Heart left ventricle (tissue), 16 donors: ENCODE measurements at regions of chr9 and their contacts with region 1.

Region 1: GRCh38 chr9:85108229-85108628 is 438.7 kb downstream of the NTRK2 start:
- DNase-seq: no peak
- ATAC-seq: no peak
- H3K4me3 ChIP-seq: no peak overlapping the region
- H3K27ac ChIP-seq: no peak overlapping the region
- H3K4me1 ChIP-seq: no peaks in the 10 kb centered on the region
- H3K27me3 ChIP-seq: no peaks in the 10 kb centered on the region
- CTCF ChIP-seq: no peak
- POLR2A ChIP-seq: no peak

Region 2: GRCh38 chr9:85163415-85163814 is 55.2 kb after region 1 on chr9:
- intact Hi-C with region 1: loop called in 1 of 10 experiments (anchors 10 kb)
- DNase-seq: no peak
- ATAC-seq: no peak
- H3K4me3 ChIP-seq: no peak overlapping the region
- H3K27ac ChIP-seq: no peak overlapping the region
- H3K4me1 ChIP-seq: no peaks in the 10 kb centered on the region
- H3K27me3 ChIP-seq: no peaks in the 10 kb centered on the region
- CTCF ChIP-seq: no peak
- POLR2A ChIP-seq: no peak

Region 3: GRCh38 chr9:85290019-85290418 is 181.8 kb after region 1 on chr9:
- intact Hi-C with region 1: no loop called
- DNase-seq: no peak
- ATAC-seq: no peak
- H3K4me3 ChIP-seq: no peak overlapping the region
- H3K27ac ChIP-seq: no peak overlapping the region
- H3K4me1 ChIP-seq: no peaks in the 10 kb centered on the region
- H3K27me3 ChIP-seq: no peaks in the 10 kb centered on the region
- CTCF ChIP-seq: no peak
- POLR2A ChIP-seq: no peak

Region 4: DNA sequence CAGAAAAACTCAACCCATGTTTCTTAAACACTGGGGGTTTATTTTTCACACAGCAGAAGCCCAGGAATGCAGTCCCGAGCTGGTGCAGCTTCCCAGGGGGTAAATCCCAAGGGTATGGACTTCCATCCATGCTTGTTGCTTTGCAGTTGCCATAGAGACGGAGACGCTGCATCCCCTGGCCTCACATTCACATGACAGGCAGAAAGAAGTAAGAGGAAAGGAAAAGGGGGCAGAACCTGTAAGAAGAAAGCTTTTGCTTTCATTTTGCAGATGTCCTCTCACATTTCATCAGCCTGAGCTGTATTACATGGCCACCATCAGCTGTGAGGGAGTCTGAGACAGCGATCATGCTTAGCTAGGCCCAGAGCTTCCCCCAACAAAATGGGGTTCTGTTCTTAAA is 312.5 kb after region 1 on chr9:
- intact Hi-C with region 1: no loop called
- DNase-seq: no peak
- ATAC-seq: no peak
- H3K4me3 ChIP-seq: no peak overlapping the region
- H3K27ac ChIP-seq: no peak overlapping the region
- H3K4me1 ChIP-seq: peaks cover 0 to 3% (median 0%) of the 10 kb centered on the region in 12 donors
- H3K27me3 ChIP-seq: no peaks in the 10 kb centered on the region
- CTCF ChIP-seq: no peak
- POLR2A ChIP-seq: no peak